ENCODE measurements at regions of chr5 and their contacts with region 1.

Region 1: GRCh38 chr5:103808464-103809106 is 246.0 kb upstream of the NUDT12 start:
- DNase-seq: no peak
- ATAC-seq: peak; percentile 95
- H3K4me3 ChIP-seq: no peak overlapping the region
- H3K27ac ChIP-seq: no peak overlapping the region
- H3K4me1 ChIP-seq: no peaks in the 10 kb centered on the region
- H3K27me3 ChIP-seq: no peaks in the 10 kb centered on the region
- CTCF ChIP-seq: peak; percentile 82 to 92 (median 85)
- EP300 ChIP-seq: no peak
- POLR2A ChIP-seq: no peak
- RAD21 ChIP-seq: peak; percentile 87

Region 2: GRCh38 chr5:103475629-103476240 is 332.9 kb before region 1 on chr5:
- CTCF ChIA-PET with region 1: no interaction called
- POLR2A ChIA-PET with region 1: no interaction called
- RAD21 ChIA-PET with region 1: no interaction called
- SMC1A ChIA-PET with region 1: no interaction called
- in situ Hi-C with region 1: no loop called
- intact Hi-C with region 1: no loop called
- DNase-seq: no peak
- ATAC-seq: peak; percentile 73
- H3K4me3 ChIP-seq: no peak overlapping the region
- H3K27ac ChIP-seq: no peak overlapping the region
- H3K4me1 ChIP-seq: no peaks in the 10 kb centered on the region
- H3K27me3 ChIP-seq: no peaks in the 10 kb centered on the region; a peak in 1 of 4 replicates
- CTCF ChIP-seq: peak; percentile 45 to 74 (median 53)
- EP300 ChIP-seq: no peak
- POLR2A ChIP-seq: no peak
- RAD21 ChIP-seq: peak; percentile 85

Region 3: DNA sequence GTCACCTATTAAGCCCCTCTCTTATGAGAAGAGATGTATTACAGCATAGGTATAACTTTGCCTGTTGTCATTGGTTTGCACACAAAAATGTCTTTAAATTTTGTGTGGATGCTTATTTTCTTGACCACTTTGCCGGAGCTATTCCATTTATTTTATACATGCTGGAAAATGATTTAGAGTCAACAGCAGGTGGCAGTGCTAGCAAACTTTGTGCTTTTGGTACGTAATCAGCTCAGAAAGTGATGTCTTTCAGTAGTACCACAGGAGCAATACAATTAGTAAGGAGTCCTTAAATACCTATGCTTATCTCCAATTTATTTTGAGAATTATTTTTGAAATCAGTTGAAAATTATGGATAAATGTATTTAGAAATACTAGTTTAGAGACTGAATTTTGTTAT is 226.2 kb before region 1 on chr5:
- CTCF ChIA-PET with region 1: interaction called, 5 read pairs
- POLR2A ChIA-PET with region 1: no interaction called
- RAD21 ChIA-PET with region 1: interaction called, 6 read pairs
- SMC1A ChIA-PET with region 1: interaction called, 4 read pairs
- in situ Hi-C with region 1: no loop called
- intact Hi-C with region 1: loop called (anchors 5 kb)
- DNase-seq: peak; percentile 5
- ATAC-seq: peak; percentile 63
- H3K4me3 ChIP-seq: no peak overlapping the region
- H3K27ac ChIP-seq: no peak overlapping the region
- H3K4me1 ChIP-seq: no peaks in the 10 kb centered on the region
- H3K27me3 ChIP-seq: no peaks in the 10 kb centered on the region
- CTCF ChIP-seq: peak; percentile 35 to 49 (median 42); a peak in 5 of 6 replicates
- EP300 ChIP-seq: no peak
- POLR2A ChIP-seq: no peak
- RAD21 ChIP-seq: peak; percentile 64

Region 4: DNA sequence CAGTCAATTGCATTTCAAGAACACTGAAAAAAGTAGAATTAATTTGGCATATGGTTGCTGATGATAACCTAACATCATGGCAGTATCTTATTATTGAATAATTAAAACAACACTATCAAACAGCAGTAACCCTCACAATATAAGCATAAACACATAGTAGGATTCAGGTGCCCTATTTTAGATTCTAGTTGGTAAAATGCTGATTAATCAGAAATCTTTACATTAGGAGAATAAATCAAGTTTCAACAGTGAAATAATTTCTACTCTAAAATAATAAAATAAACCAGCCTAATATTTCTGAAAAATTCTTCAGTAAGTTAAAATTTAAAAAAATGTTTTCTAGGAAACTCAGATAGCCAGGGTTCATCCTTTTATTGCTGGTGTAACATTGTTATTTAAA is 169.6 kb before region 1 on chr5:
- CTCF ChIA-PET with region 1: no interaction called
- POLR2A ChIA-PET with region 1: no interaction called
- RAD21 ChIA-PET with region 1: no interaction called
- SMC1A ChIA-PET with region 1: no interaction called
- in situ Hi-C with region 1: no loop called
- intact Hi-C with region 1: no loop called
- DNase-seq: no peak
- ATAC-seq: no peak
- H3K4me3 ChIP-seq: no peak overlapping the region
- H3K27ac ChIP-seq: no peak overlapping the region
- H3K4me1 ChIP-seq: no peaks in the 10 kb centered on the region
- H3K27me3 ChIP-seq: no peaks in the 10 kb centered on the region
- CTCF ChIP-seq: no peak
- EP300 ChIP-seq: no peak
- POLR2A ChIP-seq: no peak
- RAD21 ChIP-seq: no peak

Region 5: GRCh38 chr5:103703617-103704016 is 105.0 kb before region 1 on chr5:
- CTCF ChIA-PET with region 1: no interaction called
- POLR2A ChIA-PET with region 1: no interaction called
- RAD21 ChIA-PET with region 1: no interaction called
- SMC1A ChIA-PET with region 1: no interaction called
- in situ Hi-C with region 1: no loop called
- intact Hi-C with region 1: no loop called
- DNase-seq: no peak
- ATAC-seq: no peak
- H3K4me3 ChIP-seq: no peak overlapping the region
- H3K27ac ChIP-seq: no peak overlapping the region
- H3K4me1 ChIP-seq: no peaks in the 10 kb centered on the region
- H3K27me3 ChIP-seq: no peaks in the 10 kb centered on the region
- CTCF ChIP-seq: no peak
- EP300 ChIP-seq: no peak
- POLR2A ChIP-seq: no peak
- RAD21 ChIP-seq: no peak

Region 6: GRCh38 chr5:103829585-103829984 is 21.0 kb after region 1 on chr5:
- CTCF ChIA-PET with region 1: interaction called, 16 read pairs
- POLR2A ChIA-PET with region 1: no interaction called
- RAD21 ChIA-PET with region 1: interaction called, 7 read pairs
- SMC1A ChIA-PET with region 1: interaction called, 6 read pairs
- in situ Hi-C with region 1: no loop called
- intact Hi-C with region 1: no loop called
- DNase-seq: no peak
- ATAC-seq: 0 out of 3 replicates have a peak, but pooled peaks have one; percentile 42
- H3K4me3 ChIP-seq: no peak overlapping the region
- H3K27ac ChIP-seq: no peak overlapping the region
- H3K4me1 ChIP-seq: no peaks in the 10 kb centered on the region
- H3K27me3 ChIP-seq: no peaks in the 10 kb centered on the region; a peak in 2 of 4 replicates
- CTCF ChIP-seq: peak; percentile 40 to 41 (median 41)
- EP300 ChIP-seq: no peak
- POLR2A ChIP-seq: no peak
- RAD21 ChIP-seq: 0 out of 2 replicates have a peak, but pooled peaks have one; percentile 7

Region 7: DNA sequence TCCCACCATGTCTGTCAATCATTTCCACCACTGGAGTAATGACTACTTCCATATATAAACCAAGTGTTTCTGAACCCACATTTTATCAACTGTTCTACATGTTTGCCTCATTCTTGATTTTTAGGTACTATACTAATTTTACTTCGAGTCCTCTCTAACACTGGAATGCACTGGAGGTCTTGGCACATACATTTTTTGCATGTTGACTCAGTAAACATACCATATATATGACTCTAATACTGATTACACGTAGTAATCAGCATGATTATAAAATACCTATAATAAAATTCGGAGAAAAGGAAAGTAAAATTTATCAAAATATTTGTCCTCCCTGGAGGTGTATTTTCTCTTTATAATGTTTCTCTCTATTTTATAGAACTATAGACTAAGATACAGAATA is 375.7 kb after region 1 on chr5:
- CTCF ChIA-PET with region 1: interaction called, 83 read pairs
- POLR2A ChIA-PET with region 1: no interaction called
- RAD21 ChIA-PET with region 1: interaction called, 78 read pairs
- SMC1A ChIA-PET with region 1: interaction called, 66 read pairs
- in situ Hi-C with region 1: loop called (anchors 5 kb)
- intact Hi-C with region 1: loop called (anchors 1 kb)
- DNase-seq: no peak
- ATAC-seq: no peak
- H3K4me3 ChIP-seq: no peak overlapping the region
- H3K27ac ChIP-seq: no peak overlapping the region
- H3K4me1 ChIP-seq: no peaks in the 10 kb centered on the region
- H3K27me3 ChIP-seq: no peaks in the 10 kb centered on the region
- CTCF ChIP-seq: no peak
- EP300 ChIP-seq: no peak
- POLR2A ChIP-seq: no peak
- RAD21 ChIP-seq: no peak

Region 8: GRCh38 chr5:104800436-104801048 is 992.0 kb after region 1 on chr5:
- CTCF ChIA-PET with region 1: interaction called, 13 read pairs
- POLR2A ChIA-PET with region 1: no interaction called
- RAD21 ChIA-PET with region 1: interaction called, 7 read pairs
- SMC1A ChIA-PET with region 1: interaction called, 8 read pairs
- in situ Hi-C with region 1: no loop called
- intact Hi-C with region 1: no loop called
- DNase-seq: no peak
- ATAC-seq: peak; percentile 81
- H3K4me3 ChIP-seq: no peak overlapping the region
- H3K27ac ChIP-seq: no peak overlapping the region
- H3K4me1 ChIP-seq: no peaks in the 10 kb centered on the region
- H3K27me3 ChIP-seq: no peaks in the 10 kb centered on the region
- CTCF ChIP-seq: peak; percentile 51 to 76 (median 53)
- EP300 ChIP-seq: no peak
- POLR2A ChIP-seq: no peak
- RAD21 ChIP-seq: peak; percentile 37

Measured in GM12878 (cell line).